Tibial artery (tissue), 4 donors: ENCODE measurements at regions of chr6 and their contacts with region 1.

Region 1: GRCh38 chr6:34248727-34249551 is at the start of gene SMIM29:
- DNase-seq: peak; percentile 95 to 99
- H3K4me3 ChIP-seq: peak within 1 kb of the TSS; percentile 80 to 83
- H3K27ac ChIP-seq: peak within 1 kb of the TSS; percentile 87 to 92
- H3K4me1 ChIP-seq: peaks cover 7 to 32% (median 23%) of the 10 kb centered on the region in 4 donors
- H3K27me3 ChIP-seq: no peaks in the 10 kb centered on the region
- CTCF ChIP-seq: peak; percentile 96 to 98

Region 2: DNA sequence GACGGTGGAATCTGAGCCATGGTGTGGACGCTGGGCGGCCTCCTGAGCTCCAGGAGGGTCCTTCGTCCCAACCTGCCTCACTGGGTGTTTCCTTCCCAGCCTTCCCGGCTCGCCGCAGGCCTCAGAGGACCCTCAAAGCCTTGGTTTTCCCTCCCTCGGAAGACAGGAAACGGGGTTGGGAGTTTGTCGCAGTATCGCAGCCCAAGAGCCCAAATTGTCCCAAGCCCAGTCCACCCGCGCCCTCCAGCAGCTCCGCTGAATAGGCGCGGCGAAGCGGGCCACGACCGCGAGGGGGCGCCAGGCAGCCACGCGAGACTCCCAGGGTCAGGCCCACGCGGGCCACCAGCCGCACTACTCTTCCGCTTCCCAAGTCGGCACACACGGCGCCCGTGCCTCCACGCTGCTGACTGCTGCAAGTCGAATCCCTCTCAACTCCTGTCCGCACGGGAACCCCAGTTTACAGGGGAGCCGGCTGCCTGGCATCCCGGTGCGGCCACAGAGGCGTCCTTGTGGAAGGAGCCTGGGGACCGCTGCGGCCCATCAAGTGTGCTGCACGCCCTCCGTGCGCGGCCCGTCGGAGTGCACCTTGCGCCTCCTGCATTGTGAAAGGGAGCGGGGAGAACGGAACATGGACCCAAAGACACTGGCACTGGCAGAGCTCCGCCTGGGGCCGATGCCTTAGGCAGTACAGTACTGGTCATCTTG is 52.7 kb before region 1 on chr6:
- intact Hi-C with region 1: loop called (anchors 5 kb)
- DNase-seq: peak; percentile 88 to 91
- H3K4me3 ChIP-seq: peak overlapping the region; percentile 44 to 56
- H3K27ac ChIP-seq: no peak overlapping the region
- H3K4me1 ChIP-seq: peaks cover 0 to 13% (median 8%) of the 10 kb centered on the region in 4 donors
- H3K27me3 ChIP-seq: no peaks in the 10 kb centered on the region
- CTCF ChIP-seq: peak; percentile 98 to 99

Region 3: DNA sequence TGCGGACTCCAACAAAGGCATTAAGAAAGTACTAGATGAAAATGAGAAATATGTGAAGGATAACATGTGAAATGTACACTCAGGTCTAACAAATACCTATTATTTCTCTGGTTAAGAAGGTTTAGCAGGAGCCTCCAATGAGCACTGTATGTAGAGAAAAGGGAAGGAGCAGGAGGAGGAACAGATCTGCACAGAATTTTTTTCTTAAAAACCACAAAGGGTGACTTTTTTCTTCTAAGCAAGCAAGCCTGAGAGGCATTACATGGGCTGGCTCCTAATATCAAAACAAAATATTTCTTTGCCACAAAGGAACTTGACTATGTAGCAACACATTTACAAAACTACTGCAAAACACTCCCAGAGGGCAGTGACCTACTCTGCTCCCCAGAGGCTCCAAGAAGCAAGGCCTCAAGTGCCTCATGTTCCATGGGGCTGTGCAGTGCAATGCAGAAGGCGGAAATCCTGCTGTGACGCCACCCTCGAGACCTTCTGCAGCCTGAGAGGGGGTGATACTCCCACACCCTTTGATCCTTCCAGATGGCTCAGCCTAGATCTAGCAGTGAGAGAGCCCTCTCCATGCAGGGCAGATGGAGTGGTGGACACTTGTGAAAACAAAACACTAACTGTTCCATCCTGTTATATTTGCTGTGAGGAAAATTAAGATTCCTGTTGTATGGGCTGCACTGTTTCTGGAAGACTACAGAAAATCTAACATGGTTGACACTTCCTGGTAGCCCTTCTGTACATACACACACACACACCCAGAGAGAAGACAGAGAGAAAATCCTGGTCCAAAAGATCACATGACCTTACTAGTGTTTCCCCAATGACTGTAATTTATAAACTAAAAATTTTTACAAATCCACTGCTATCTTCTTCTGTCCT is 35.9 kb after region 1 on chr6:
- intact Hi-C with region 1: loop called (anchors 2 kb)
- DNase-seq: peak; percentile 55 to 77
- H3K4me3 ChIP-seq: no peak overlapping the region
- H3K27ac ChIP-seq: no peak overlapping the region
- H3K4me1 ChIP-seq: peaks cover 0 to 17% (median 0%) of the 10 kb centered on the region in 4 donors
- H3K27me3 ChIP-seq: no peaks in the 10 kb centered on the region
- CTCF ChIP-seq: no peak

Region 4: DNA sequence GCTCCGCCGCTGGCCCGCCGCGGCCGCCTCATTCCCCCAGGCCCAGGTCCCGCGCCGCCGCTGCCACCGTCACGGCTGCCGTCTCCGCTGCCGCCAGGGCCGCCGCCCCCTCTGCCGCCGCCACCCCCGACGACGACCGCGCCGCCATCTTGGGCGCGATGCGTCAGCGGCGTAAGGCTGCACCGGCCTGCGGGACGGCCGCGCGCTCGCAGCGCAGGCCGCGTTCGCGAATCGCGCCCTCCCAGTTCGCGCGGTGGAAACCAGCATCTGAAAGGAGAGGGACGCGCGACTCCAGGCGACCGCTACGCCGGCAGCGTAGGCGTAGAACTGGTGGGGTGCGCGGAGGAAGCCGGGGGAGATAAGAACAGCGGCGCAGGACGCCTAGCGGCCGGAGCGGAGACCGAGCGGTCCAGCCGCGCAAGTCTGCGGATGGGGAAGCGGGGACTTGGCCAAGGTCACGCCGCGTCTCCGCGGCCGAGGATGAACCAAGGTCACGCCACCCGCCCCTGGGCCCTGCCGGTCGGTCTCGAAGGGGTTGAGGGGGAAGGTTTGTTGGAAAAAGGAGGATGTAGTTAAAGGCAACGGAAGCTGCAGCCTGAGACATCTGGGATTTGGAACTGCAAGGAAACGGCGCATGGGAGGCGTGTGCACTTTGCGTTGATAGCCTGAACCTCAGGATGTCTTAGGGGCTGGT is 143.7 kb after region 1 on chr6 and contains the start of gene NUDT3:
- intact Hi-C with region 1: loop called (anchors 5 kb)
- DNase-seq: peak; percentile 94 to 97
- H3K4me3 ChIP-seq: peak within 1 kb of the TSS; percentile 81 to 98
- H3K27ac ChIP-seq: peak within 1 kb of the TSS; percentile 93 to 95
- H3K4me1 ChIP-seq: peaks cover 0 to 51% (median 13%) of the 10 kb centered on the region in 4 donors
- H3K27me3 ChIP-seq: no peaks in the 10 kb centered on the region
- CTCF ChIP-seq: peak; percentile 84 to 92

Region 5: GRCh38 chr6:34414999-34415858 is 166.3 kb after region 1 on chr6:
- intact Hi-C with region 1: loop called (anchors 5 kb)
- DNase-seq: peak; percentile 75 to 79
- H3K4me3 ChIP-seq: peak overlapping the region in 1 of 2 donors; percentile 10
- H3K27ac ChIP-seq: peak overlapping the region; percentile 76 to 77
- H3K4me1 ChIP-seq: peaks cover 0 to 12% (median 8%) of the 10 kb centered on the region in 4 donors
- H3K27me3 ChIP-seq: no peaks in the 10 kb centered on the region
- CTCF ChIP-seq: peak; percentile 70 to 90